Cardiac septum (tissue), 1 donor: ENCODE measurements at regions of chr18 and their contacts with region 1.

Region 1: GRCh38 chr18:1585879-1586488 is 681.3 kb downstream of the ADCYAP1 start:
- DNase-seq: no peak

Region 2: DNA sequence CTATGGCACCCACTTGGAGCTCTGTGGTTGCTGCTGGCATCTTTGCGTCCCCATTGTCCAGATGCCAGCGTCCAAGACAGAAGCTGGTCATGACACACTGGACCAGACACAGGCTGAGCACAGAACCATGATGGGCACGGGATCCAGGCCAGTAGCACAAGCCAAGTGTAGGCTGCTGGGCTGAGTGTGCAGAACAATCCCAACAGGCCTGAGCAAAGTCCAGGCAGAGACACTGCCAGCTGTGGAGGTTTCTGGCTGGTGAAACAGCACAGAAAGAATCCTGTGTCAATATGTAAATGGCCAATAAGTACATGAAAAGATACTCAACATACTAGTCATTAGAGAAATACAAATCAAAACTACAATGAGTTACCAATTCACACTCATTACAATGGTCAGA is 279.9 kb after region 1 on chr18:
- intact Hi-C with region 1: no loop called
- DNase-seq: no peak

Region 3: GRCh38 chr18:2134364-2134763 is 548.4 kb after region 1 on chr18:
- intact Hi-C with region 1: no loop called
- DNase-seq: no peak

Region 4: DNA sequence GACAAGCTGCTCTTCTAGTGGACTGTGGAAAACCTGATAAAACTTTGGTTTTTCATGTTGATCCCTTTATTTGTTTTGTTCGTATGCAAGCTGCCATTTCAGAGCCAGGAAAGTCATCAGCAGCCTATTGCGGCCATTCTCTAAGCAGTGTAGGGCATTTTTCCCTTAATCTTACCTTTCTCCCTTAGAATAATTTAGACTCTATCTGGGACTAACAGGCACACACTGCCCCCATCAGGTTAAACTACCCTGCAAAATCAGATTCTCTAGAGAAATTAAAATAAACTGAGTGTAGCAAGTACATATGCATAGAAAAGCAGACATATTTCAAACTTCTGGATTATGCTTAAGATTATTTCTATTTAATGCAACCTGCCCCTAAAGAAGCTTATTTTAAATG is 637.9 kb after region 1 on chr18:
- intact Hi-C with region 1: loop called (anchors 10 kb)
- DNase-seq: no peak